Mucosa of descending colon (tissue), 3 donors: ENCODE measurements at regions of chr16 and their contacts with region 1.

Region 1: GRCh38 chr16:81737885-81738786 is 41.0 kb upstream of the PLCG2 start:
- DNase-seq: peak; percentile 80 to 94 (median 87)
- ATAC-seq: peak; percentile 95
- H3K4me3 ChIP-seq: no peak overlapping the region
- H3K4me1 ChIP-seq: peaks cover 5% of the 10 kb centered on the region
- CTCF ChIP-seq: peak; percentile 56

Region 2: DNA sequence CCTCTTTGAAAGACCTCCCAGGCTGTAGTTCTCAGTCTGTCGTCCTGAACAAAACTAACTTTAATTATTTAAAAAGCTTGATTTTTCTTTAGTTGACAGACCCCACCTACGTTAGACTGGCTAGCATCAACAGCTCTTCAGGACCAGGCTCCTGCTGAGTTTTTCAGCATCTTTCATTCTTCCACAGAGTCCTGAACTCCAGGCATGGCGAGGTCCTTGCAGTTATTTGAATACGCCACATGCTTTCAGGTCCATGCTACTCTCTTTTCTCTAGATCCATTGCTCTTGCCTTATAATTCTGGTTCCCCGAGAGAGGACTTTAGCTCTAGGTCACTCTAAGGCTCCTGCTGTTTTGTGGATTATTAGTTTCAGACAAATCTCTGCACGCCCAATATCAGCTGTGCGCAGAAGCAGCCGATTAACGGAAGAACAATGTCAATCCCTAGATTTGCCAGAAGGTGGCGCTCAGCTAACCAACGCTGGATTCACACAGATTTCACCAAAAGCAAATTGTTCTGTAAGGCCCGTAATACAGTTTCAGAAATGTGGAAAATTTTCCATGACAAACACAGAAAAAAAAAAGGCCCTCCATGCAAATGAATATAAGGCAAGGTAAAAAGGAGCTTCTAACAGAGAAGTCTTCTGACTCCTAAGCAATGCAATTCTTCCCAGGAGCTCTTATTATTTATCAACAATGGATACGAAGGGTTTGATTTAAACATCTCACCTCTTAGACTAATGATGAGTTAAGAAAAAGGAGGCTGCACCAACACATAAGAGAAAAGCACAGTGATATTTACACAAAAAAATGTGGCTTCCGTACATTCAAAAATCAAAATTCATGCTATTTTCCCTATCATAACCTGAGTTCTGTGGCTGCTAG is 533.1 kb before region 1 on chr16:
- intact Hi-C with region 1: loop called in 1 of 2 experiments (anchors 5 kb)
- DNase-seq: peak in 1 of 3 donors; percentile 65
- ATAC-seq: peak; percentile 66
- H3K4me3 ChIP-seq: no peak overlapping the region
- H3K4me1 ChIP-seq: no peaks in the 10 kb centered on the region
- CTCF ChIP-seq: peak; percentile 71

Region 3: DNA sequence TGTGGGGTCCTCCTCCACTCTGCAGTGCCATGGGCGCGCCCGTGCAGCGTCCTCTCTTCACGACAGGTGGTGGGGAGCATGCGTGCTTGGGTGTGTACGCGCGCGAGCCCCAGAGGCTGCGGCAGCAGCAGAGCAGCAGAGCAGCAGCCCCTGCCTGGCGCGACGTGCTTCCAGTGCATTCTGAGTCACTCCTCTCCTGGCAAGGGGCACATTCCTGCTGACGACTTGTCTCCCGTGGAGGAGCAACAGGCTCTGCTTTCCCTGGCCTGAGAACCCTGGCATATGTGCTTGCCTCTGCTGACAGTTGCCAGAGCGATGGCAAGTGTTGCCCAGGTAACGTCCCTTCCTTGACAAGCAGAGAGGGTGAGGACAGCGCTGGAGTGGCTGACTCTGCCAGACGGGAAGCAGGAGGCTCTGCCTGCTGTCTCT is 92.9 kb before region 1 on chr16:
- intact Hi-C with region 1: no loop called
- DNase-seq: no peak
- ATAC-seq: peak; percentile 29
- H3K4me3 ChIP-seq: no peak overlapping the region
- H3K4me1 ChIP-seq: peaks cover 2% of the 10 kb centered on the region
- CTCF ChIP-seq: no peak

Region 4: DNA sequence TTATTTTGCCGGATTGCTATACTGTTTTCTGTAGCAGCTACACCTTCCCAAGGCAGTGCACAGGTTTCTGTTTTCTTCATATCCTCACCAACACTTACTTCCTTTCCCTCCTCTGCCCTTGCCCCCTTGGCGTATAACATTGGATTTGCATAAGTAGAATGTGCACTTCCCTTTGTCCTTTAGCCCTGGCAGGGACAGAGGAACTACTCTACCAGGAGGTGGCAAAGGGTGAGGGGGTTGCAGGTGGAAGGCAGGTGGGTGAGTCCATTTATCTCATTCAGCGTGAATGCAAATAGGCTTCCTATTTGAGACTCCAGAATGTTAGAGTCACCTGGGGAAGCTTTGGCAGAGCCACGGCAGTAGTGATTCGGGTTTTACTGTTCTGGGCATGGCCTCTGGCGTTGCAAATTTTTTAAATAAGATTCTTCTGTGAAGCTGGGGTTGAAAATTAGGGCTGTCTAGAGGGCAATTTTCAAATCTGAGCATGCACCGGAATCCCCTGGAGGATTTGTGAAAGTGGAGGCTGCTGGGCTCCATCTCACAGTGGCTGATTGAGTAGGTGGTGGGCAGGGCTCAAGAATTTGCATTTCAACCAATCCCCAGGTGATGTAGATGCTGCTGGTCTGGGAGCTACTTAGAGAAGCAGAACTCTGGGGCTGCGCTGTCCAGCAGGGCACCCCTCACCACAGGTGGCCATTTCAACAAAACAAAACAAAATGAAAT is 125.7 kb after region 1 on chr16:
- intact Hi-C with region 1: no loop called
- DNase-seq: no peak
- ATAC-seq: peak; percentile 61
- H3K4me3 ChIP-seq: no peak overlapping the region
- H3K4me1 ChIP-seq: no peaks in the 10 kb centered on the region
- CTCF ChIP-seq: no peak

Region 5: GRCh38 chr16:81956213-81956948 is 218.2 kb after region 1 on chr16:
- intact Hi-C with region 1: no loop called
- DNase-seq: no peak
- ATAC-seq: no peak
- H3K4me3 ChIP-seq: no peak overlapping the region
- H3K4me1 ChIP-seq: no peaks in the 10 kb centered on the region
- CTCF ChIP-seq: no peak